H1 (cell line): ENCODE measurements at regions of chr2 and their contacts with region 1.

Region 1: DNA sequence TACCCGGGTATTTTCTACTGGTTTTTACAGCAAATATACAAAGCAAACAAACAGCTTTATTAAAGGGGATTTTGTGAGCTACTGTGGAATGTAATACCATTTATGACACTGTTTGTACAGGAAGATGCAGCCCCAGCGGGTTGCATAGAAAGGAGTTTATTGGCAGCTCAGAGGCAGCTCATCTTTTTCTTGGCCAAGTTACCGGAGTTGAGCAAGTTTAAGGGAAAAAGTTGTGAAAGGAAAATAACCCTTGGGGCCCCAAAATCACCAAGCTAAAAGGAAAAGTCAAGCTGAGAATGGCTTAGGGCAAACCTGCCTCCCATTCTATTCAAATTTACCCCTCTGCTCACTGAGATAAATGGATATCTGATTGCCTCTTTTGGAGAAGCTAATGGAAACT is 60.8 kb downstream of the MOB4 start:
- DNase-seq: no peak
- H3K4me3 ChIP-seq: no peak overlapping the region
- H3K27ac ChIP-seq: no peak overlapping the region
- H3K4me1 ChIP-seq: peaks cover 0 to 17% (median 5%) of the 10 kb centered on the region in 4 experiments; a peak in 4 of 7 replicates
- H3K27me3 ChIP-seq: no peaks in the 10 kb centered on the region; a peak in 1 of 7 replicates
- CTCF ChIP-seq: no peak
- EP300 ChIP-seq: no peak
- POLR2A ChIP-seq: no peak
- RAD21 ChIP-seq: no peak

Region 2: GRCh38 chr2:197591339-197592072 is 14.9 kb after region 1 on chr2:
- CTCF ChIA-PET with region 1: no interaction called
- POLR2A ChIA-PET with region 1: interaction called, 23 read pairs
- DNase-seq: no peak
- H3K4me3 ChIP-seq: no peak overlapping the region
- H3K27ac ChIP-seq: no peak overlapping the region
- H3K4me1 ChIP-seq: peaks cover 4 to 12% (median 7%) of the 10 kb centered on the region in 4 experiments
- H3K27me3 ChIP-seq: no peaks in the 10 kb centered on the region
- CTCF ChIP-seq: no peak
- EP300 ChIP-seq: no peak
- POLR2A ChIP-seq: no peak
- RAD21 ChIP-seq: peak in 1 of 2 experiments; percentile 21; a peak in 1 of 4 replicates